ENCODE measurements at regions of chr4 and their contacts with region 1.

Region 1: GRCh38 chr4:26330186-26330787 is 9.5 kb downstream of the RBPJ start:
- DNase-seq: no peak
- H3K4me3 ChIP-seq: no peak overlapping the region
- CTCF ChIP-seq: peak in 1 of 3 donors; percentile 7
- POLR2A ChIP-seq: no peak

Region 2: DNA sequence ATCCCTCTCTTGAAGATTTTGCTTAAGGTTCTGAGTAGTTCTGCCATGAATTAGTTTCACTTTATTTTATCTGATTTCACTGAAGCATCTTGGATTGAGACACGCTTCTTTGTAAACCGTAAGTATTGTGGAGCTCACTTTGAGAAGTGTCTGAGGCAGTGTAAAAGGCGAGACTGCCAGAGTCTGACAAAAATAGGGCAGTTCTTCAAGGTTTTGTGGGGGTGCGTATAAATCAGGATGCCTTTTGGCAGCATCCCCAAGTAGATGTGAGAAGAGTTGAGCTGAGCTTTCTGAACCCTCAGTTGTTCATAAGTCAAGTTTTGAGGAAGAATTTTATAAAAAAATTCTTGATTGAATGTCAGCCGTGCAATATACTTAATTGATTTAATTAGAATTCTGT is 66.8 kb after region 1 on chr4:
- intact Hi-C with region 1: loop called (anchors 10 kb)
- DNase-seq: no peak
- H3K4me3 ChIP-seq: no peak overlapping the region
- CTCF ChIP-seq: no peak
- POLR2A ChIP-seq: no peak